ENCODE measurements at regions of chr18 and their contacts with region 1.

Region 1: GRCh38 chr18:6624661-6625308 is 104.7 kb upstream of the ARHGAP28 start:
- DNase-seq: peak; percentile 71
- ATAC-seq: peak; percentile 54
- H3K4me3 ChIP-seq: no peak overlapping the region
- H3K27ac ChIP-seq: peak overlapping the region; percentile 39; the same call in 1 of the 2 replicates
- H3K4me1 ChIP-seq: peaks cover 17% of the 10 kb centered on the region
- H3K27me3 ChIP-seq: no peaks in the 10 kb centered on the region
- CTCF ChIP-seq: no peak
- POLR2A ChIP-seq: no peak
- RAD21 ChIP-seq: no peak

Region 2: DNA sequence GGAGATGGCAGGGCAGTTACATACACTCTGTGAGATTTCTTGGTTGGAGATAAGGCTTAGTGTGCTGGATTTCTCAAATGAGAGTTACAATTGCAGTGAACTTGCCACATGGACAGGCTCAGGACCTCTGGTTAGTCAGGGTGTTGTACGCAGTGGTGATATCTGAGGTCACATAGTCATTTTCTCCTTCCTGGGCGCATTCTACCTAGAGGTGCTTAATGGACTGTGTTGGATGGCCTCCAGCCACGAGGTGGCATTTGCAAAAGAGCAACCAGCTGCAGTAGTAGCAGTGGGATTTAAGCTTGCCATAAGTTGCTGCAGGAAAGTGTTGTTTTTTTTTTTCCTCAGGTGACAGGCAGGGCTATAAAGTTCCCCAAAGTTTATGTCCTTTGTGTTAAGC is 555.7 kb before region 1 on chr18:
- CTCF ChIA-PET with region 1: no interaction called
- POLR2A ChIA-PET with region 1: no interaction called
- dilution Hi-C with region 1: no loop called
- in situ Hi-C with region 1: no loop called
- intact Hi-C with region 1: no loop called
- DNase-seq: no peak
- ATAC-seq: no peak
- H3K4me3 ChIP-seq: no peak overlapping the region
- H3K27ac ChIP-seq: no peak overlapping the region
- H3K4me1 ChIP-seq: no peaks in the 10 kb centered on the region
- H3K27me3 ChIP-seq: no peaks in the 10 kb centered on the region
- CTCF ChIP-seq: no peak
- POLR2A ChIP-seq: no peak
- RAD21 ChIP-seq: no peak

Region 3: DNA sequence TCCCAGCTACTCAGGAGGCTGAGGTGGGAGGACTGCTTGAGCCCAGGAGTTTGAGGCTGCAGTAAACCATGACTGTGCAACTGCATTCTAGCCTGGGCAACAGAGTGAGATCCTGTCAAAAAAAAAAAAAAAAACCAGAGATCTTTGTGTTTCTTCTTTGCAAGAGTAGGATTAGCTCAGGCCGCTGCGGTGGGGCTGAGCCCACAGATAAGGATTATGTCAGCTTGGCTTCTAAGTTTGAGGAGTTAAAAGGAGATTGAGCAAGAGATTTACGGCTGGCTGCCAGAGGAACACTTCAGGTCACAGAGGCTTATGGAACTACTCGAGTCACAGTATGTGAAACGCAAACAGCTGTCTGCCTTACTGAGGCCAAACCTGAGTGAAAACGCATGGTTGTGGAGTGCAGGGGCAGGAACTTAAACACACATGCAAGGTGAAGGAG is 63.3 kb before region 1 on chr18:
- CTCF ChIA-PET with region 1: no interaction called
- POLR2A ChIA-PET with region 1: no interaction called
- dilution Hi-C with region 1: no loop called
- in situ Hi-C with region 1: no loop called
- intact Hi-C with region 1: loop called (anchors 5 kb)
- DNase-seq: peak; percentile 67
- ATAC-seq: peak; percentile 76
- H3K4me3 ChIP-seq: no peak overlapping the region
- H3K27ac ChIP-seq: peak overlapping the region; percentile 32; the same call in 1 of the 2 replicates
- H3K4me1 ChIP-seq: peaks cover 3% of the 10 kb centered on the region; the same call in 1 of the 2 replicates
- H3K27me3 ChIP-seq: no peaks in the 10 kb centered on the region
- CTCF ChIP-seq: no peak
- POLR2A ChIP-seq: no peak
- RAD21 ChIP-seq: no peak

Region 4: DNA sequence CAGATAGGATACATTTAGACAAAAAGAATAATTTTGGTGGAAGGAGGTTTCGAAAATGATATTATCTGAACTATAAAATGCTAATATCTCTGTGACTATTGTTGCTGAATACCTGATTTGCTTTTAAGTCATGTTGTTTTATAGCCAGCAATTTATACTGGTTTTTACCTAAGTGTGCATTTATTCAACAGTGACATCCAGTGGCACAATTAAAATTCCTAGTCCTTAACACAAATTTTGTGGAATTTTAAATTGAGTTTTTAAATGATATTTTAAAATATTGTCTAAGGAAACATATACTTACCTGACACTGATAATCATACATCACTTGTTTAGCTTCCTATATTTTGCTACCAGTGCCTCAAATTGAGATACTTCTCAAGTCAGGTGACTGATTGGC is 249.5 kb after region 1 on chr18:
- CTCF ChIA-PET with region 1: no interaction called
- POLR2A ChIA-PET with region 1: no interaction called
- dilution Hi-C with region 1: no loop called
- in situ Hi-C with region 1: no loop called
- intact Hi-C with region 1: loop called (anchors 5 kb)
- DNase-seq: peak; percentile 13
- ATAC-seq: no peak
- H3K4me3 ChIP-seq: no peak overlapping the region
- H3K27ac ChIP-seq: no peak overlapping the region
- H3K4me1 ChIP-seq: peaks cover 3% of the 10 kb centered on the region; the same call in 1 of the 2 replicates
- H3K27me3 ChIP-seq: no peaks in the 10 kb centered on the region
- CTCF ChIP-seq: peak; percentile 44
- POLR2A ChIP-seq: no peak
- RAD21 ChIP-seq: peak; percentile 50